Dendritic cell treated with granulocyte-macrophage colony-stimulating factor and Interleukin-4, amounts not matched to agents 40 ng/mL and 50 ng/mL, for 4 days (primary cell): ENCODE measurements at regions of chr17 and their contacts with region 1.

Region 1: GRCh38 chr17:2796164-2797125 is at the start of gene RAP1GAP2:
- H3K4me3 Mint-ChIP-seq: peak within 1 kb of the TSS; percentile 97
- H3K27ac Mint-ChIP-seq: peak within 1 kb of the TSS; percentile 73
- H3K4me1 Mint-ChIP-seq: peaks cover 87% of the 10 kb centered on the region
- H3K27me3 Mint-ChIP-seq: no peaks in the 10 kb centered on the region

Region 2: DNA sequence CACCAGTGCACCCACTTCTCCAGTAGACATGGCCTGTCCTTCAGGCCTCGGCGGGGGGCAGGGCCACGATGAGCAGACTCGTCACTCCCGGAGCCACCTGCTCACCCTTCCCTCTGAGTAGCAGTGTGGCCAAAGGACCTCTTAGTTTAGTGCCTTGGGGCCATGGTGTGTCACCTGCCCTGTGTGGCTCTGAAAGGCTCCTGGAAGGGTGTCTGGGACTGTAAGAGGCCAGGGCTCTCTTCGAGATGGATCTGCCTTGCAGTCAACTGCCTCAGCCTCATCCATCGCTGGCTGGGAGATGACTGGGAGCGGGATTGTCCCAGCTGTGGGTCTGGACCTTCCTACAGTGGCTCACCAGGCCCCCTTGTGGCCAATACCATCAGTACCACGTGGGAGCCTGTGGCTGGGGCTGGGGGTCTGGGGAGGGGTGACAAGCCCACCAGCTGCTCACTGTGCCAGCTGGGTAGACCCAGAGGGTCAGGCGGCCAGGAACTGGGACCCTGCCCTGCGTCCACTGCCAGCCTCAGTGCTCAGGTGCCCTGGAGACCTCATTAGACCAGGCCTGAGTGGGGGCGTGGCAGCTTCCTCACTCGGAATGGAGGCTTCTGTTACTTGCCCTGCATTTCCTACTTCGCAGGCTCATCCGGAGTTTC is 133.6 kb after region 1 on chr17:
- intact Hi-C with region 1: loop called (anchors 10 kb)
- H3K4me3 Mint-ChIP-seq: no peak overlapping the region
- H3K27ac Mint-ChIP-seq: no peak overlapping the region
- H3K4me1 Mint-ChIP-seq: peaks cover 33% of the 10 kb centered on the region
- H3K27me3 Mint-ChIP-seq: no peaks in the 10 kb centered on the region

Region 3: DNA sequence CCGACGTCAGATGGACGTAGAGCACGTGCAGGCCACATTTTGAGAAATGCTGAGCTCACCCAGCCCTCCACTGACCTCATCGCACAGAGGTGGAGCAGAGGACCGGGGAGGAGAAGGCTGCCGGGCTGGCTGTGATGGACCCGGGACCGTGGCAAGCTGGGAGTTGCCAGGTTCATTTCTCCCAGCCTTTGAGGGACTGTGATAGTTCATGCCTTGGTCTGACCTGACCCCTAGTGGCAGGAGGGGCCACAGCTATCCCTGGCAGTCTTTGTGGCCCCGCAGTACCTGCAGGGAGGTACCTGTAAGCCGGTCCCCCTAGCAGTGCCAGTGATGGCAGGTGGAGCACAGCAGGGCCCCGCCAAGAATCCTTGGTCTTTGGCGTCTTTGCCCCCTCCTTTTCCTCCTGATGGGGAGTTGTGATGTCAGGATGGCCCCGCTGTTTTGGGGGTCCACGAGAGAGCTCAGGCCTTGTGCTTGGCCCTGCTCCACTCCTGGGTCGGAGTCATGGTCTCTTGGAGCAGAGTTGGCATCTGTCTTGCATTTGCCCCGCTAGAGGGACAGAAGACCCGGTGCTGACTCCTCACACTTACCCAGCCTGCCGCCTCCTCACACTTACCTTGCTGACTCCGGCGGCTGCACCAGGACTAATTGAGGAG is 216.6 kb after region 1 on chr17:
- intact Hi-C with region 1: loop called (anchors 5 kb)
- H3K4me3 Mint-ChIP-seq: no peak overlapping the region
- H3K27ac Mint-ChIP-seq: no peak overlapping the region
- H3K4me1 Mint-ChIP-seq: no peaks in the 10 kb centered on the region
- H3K27me3 Mint-ChIP-seq: no peaks in the 10 kb centered on the region